H1 (cell line): ENCODE measurements at regions of chr22 and their contacts with region 1.

Region 1: DNA sequence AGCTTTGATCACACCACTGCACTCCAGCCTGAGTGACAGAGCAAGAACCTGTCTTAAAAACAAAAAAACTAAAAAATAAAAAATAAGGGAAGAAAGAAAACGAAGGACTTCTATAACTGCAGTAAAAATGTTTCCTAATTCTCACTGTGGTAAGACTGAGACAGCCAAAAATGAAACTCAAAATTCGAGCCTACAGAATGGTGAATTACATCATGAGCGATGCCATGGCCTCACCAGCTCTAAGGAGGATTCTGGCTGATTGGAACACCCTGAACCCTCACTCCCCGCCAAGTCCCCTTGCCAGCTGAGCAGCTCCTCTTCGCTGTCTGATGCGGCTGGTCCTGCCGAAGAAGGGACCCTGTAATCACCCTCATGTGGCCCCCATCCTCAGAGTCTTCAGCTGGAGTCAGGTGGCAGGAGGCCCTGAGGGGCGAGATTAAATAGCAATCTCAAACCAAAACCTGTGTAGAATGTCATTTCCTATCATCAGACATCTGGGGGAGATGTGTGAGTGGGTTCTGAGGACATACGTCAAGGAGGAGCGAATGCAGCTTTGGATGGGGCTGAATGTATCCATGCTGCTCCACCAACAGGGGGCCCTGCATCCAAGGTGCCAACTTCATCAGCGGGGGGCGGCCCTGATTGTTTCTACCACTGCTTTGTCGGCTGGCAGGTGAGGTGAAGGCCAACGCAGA is 29.2 kb downstream of the PDGFB start:
- DNase-seq: peak in 1 of 2 experiments; percentile 67
- H3K4me3 ChIP-seq: no peak overlapping the region
- H3K27ac ChIP-seq: no peak overlapping the region; the same call in 1 of the 2 replicates
- H3K4me1 ChIP-seq: peaks cover 15 to 30% (median 20%) of the 10 kb centered on the region in 4 experiments
- H3K27me3 ChIP-seq: no peaks in the 10 kb centered on the region
- CTCF ChIP-seq: peak; percentile 48 to 79 (median 76); a peak in 3 of 4 replicates
- EP300 ChIP-seq: no peak
- POLR2A ChIP-seq: no peak
- RAD21 ChIP-seq: peak; percentile 42 to 59

Region 2: DNA sequence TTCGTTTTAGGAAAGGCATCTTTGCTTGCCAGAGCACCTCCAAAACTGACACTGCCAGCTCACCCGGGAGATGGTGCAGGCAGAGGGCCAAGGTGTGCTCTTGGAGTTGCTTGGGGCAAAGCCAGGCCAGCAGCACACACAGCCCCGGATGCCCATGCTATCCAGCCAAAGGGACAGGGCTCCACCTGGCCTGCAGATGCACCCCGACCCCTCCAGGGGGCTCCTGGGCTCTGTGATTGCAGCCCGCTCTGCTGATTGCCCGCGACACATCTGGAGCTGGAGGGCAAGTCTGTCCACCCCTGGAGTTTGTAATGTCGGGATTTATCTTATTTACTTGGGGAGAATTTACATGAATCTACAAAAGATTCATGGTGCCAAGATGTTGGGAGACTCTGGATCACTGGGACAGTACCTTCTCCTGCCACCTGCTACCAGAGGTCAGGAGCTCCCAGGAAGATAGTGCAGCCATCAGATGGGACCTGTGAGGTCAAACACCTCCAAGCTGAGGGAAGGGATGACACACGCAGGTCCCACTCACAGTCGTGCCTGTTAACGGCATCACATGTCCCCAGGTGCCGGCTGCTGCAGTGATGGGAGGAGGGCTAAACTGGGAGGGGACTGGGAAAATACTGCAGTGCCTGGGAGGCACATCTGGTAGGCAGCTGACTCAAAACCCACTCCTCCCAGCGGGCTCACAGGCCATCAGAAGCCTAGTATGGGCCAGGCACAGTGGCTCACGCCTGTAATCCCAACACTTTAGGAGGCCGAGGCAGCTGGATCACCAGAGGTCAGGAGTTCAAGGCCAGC is 80.3 kb before region 1 on chr22:
- CTCF ChIA-PET with region 1: no interaction called
- POLR2A ChIA-PET with region 1: no interaction called
- DNase-seq: peak; percentile 50 to 90
- H3K4me3 ChIP-seq: no peak overlapping the region
- H3K27ac ChIP-seq: no peak overlapping the region
- H3K4me1 ChIP-seq: peaks cover 4 to 17% (median 11%) of the 10 kb centered on the region in 4 experiments; a peak in 4 of 7 replicates
- H3K27me3 ChIP-seq: no peaks in the 10 kb centered on the region
- CTCF ChIP-seq: peak; percentile 85 to 92 (median 92)
- EP300 ChIP-seq: no peak
- POLR2A ChIP-seq: no peak
- RAD21 ChIP-seq: peak; percentile 88 to 94

Region 3: DNA sequence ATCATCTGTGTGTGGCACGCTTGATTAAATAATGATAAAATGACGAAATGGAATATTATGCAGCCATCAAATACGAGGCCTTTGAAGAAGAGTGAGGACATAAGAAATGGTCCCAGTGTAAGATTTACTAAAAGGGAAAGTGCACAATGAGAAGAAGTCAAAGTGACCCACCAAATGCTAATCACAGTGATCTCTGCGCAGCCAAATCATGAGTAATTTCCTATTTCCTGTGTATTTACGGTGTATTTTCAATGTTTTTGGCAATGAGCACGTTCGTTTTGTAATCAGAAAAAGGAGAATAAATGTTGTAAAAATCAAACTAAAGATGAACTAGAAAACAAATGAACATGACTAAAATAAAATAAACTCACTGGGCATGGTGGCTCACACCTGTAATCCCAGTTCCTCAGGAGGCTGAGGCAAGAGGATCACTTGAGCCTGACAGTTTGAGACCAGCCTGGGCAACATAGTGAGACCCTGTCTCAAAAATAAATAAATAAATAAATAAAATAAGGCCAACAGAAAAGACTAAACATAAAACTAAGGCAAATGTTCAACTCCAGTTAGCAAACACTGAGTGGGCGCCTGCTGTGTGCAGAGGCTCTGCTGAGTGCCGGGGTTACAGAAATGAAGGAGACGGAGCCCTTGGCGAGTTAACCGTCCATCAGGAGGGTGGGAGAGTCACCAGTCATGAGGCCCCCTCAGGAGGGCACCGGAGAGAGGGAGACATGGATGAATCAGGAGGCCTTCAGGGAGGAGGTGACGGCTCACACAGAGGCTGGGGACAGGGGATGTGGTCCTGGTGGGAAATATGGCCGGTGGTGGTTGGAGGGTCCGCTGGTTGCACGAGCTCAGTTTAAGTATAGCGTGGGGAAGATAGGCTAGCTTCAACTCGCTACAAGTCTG is 37.1 kb before region 1 on chr22:
- CTCF ChIA-PET with region 1: interaction called, 35 read pairs
- POLR2A ChIA-PET with region 1: interaction called, 79 read pairs
- DNase-seq: no peak
- H3K4me3 ChIP-seq: no peak overlapping the region
- H3K27ac ChIP-seq: no peak overlapping the region
- H3K4me1 ChIP-seq: peaks cover 19 to 49% (median 44%) of the 10 kb centered on the region in 4 experiments
- H3K27me3 ChIP-seq: no peaks in the 10 kb centered on the region
- CTCF ChIP-seq: no peak
- EP300 ChIP-seq: no peak
- POLR2A ChIP-seq: no peak
- RAD21 ChIP-seq: no peak

Region 4: DNA sequence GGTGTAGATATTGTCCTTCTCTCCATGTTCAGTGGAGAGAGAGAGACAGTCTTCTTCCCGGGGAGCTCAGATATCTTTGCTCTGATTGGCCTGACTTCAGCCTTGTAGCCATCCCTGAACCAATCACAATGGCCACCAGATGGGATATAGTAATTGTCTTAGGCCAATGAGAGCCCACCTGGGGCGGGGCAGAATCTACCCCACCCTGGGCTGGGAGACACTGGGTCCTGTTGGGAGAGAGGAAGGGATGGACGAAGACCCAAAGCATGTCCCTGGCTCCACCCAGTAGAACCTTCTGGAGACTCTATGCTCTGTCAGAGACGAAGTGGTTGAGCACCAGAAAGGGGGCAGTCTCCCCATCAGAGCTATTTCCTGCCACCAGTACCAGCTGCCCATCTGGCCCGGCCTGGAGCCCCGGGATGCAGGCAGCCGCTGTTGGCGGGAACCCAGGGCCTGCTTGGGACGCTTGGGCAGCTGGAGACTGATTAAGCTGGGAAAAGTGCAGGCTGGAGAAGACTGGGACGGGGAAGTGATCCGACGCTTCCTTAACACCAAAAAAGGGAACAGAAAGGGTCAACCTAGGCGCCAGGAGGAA is 31.5 kb before region 1 on chr22:
- CTCF ChIA-PET with region 1: interaction called, 14 read pairs
- POLR2A ChIA-PET with region 1: interaction called, 8 read pairs
- DNase-seq: no peak
- H3K4me3 ChIP-seq: no peak overlapping the region
- H3K27ac ChIP-seq: no peak overlapping the region
- H3K4me1 ChIP-seq: peaks cover 0 to 18% (median 7%) of the 10 kb centered on the region in 4 experiments; a peak in 6 of 7 replicates
- H3K27me3 ChIP-seq: no peaks in the 10 kb centered on the region
- CTCF ChIP-seq: no peak
- EP300 ChIP-seq: no peak
- POLR2A ChIP-seq: no peak; a peak in 1 of 3 replicates
- RAD21 ChIP-seq: no peak

Region 5: GRCh38 chr22:39205338-39206021 is 10.1 kb before region 1 on chr22:
- CTCF ChIA-PET with region 1: interaction called, 6 read pairs
- POLR2A ChIA-PET with region 1: interaction called, 20 read pairs
- DNase-seq: no peak
- H3K4me3 ChIP-seq: no peak overlapping the region
- H3K27ac ChIP-seq: no peak overlapping the region
- H3K4me1 ChIP-seq: peaks cover 0 to 9% (median 4%) of the 10 kb centered on the region in 4 experiments; a peak in 5 of 7 replicates
- H3K27me3 ChIP-seq: no peaks in the 10 kb centered on the region
- CTCF ChIP-seq: no peak
- EP300 ChIP-seq: no peak
- POLR2A ChIP-seq: no peak
- RAD21 ChIP-seq: no peak

Region 6: DNA sequence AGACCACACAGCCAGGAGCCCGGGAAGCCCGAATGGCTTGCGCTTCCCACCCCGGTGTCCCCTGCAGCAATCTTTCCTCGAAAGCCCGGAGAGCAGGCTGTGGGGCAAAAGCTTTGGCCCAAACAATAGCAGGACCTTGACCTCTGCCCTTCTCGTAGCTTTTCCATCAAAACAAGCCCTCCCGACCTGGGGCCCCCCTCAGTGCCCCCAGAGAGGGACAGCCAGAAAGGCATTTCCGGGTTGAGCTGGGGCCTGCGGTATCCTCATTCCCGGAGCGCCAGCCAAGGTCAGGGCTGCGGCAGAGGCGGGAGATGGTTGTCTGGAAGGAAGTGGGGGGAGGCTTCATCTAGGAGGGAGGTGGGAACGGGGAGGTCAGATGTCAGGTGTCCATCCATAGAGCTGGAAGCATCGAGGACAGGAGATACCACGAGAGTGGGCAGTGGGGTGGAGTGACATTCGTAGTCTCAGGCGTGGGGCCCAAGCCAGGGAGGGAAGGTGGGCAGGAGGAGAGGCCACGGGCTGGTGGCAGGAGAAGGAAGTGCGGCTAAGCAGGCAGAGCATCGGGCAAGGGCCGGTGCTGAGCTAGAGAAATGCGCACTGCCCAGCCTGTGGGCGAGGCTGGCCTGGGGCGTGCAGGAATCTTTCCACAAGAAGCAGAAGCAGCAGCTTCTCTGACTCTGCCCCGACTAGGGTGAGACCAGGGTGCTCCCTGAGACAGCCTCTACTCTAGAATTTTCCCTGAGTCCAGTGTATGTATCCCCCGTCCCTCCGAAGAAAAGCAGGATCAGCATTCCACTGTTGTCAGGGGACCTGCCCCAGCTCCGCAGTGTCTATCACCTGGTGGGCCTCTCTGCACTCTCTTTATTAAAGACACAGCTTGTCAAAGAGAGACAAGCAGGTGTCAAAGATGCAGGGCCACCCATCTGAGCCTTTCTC is 15.0 kb after region 1 on chr22:
- CTCF ChIA-PET with region 1: interaction called, 22 read pairs
- POLR2A ChIA-PET with region 1: interaction called, 66 read pairs
- DNase-seq: peak in 1 of 2 experiments; percentile 81
- H3K4me3 ChIP-seq: peak overlapping the region in 1 of 4 experiments; percentile 27; a peak in 3 of 8 replicates
- H3K27ac ChIP-seq: no peak overlapping the region
- H3K4me1 ChIP-seq: peaks cover 4 to 42% (median 31%) of the 10 kb centered on the region in 4 experiments
- H3K27me3 ChIP-seq: peaks cover 0 to 19% (median 6%) of the 10 kb centered on the region in 4 experiments; a peak in 5 of 7 replicates
- CTCF ChIP-seq: peak; percentile 0 to 40 (median 20); a peak in 2 of 4 replicates
- EP300 ChIP-seq: no peak
- POLR2A ChIP-seq: no peak
- RAD21 ChIP-seq: no peak; a peak in 1 of 4 replicates

Region 7: DNA sequence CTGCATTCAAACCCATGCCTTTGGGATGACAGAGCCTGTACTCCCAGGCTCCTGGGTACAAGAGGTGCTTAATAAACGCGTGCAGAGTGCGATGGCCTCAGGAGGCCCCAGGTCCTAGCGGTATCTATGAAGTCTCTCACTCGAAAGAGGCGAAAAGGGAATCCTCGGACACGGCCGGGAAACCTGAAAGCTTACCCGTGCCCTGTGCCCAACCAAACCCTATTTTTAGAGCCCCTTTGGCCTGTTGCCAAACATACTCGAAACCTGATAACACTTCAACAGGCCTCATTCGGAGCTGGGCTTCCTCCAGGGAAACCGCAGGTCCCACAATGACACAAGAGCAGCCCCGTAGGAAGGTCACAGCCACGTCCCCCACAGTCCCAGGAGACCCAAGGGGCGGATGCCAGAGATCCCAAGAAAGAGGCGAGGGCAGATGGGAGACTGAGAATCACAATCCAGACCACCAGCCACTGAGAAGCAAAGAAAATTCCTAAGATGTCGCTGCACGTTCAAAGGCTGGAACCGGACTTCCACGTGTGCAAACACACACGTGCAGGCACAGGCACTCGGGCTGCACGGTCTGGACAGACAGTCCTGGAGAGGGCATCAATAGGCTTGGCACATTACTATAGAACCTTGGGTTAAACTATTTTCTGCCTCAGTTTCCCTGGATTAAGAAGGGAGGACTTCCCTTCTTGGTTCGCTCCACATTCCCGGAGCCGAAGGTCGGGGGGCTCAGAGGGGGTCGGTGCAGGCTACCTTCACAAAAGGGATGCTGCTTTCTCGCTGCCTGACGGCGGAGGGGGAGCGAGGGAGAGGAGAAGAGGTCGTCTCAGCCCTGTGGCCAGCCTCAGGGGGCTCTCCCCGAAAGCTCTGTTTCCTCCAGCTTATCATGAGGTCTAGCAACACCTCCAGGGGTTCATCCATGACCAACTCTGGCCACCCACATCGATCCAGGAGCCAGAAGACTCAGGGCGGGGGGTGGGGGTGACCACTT is 21.0 kb after region 1 on chr22:
- CTCF ChIA-PET with region 1: interaction called, 21 read pairs
- POLR2A ChIA-PET with region 1: interaction called, 66 read pairs
- DNase-seq: no peak
- H3K4me3 ChIP-seq: no peak overlapping the region
- H3K27ac ChIP-seq: no peak overlapping the region
- H3K4me1 ChIP-seq: peaks cover 4 to 33% (median 28%) of the 10 kb centered on the region in 4 experiments
- H3K27me3 ChIP-seq: peaks cover 0 to 28% (median 16%) of the 10 kb centered on the region in 4 experiments; a peak in 5 of 7 replicates
- CTCF ChIP-seq: no peak
- EP300 ChIP-seq: no peak
- POLR2A ChIP-seq: no peak
- RAD21 ChIP-seq: no peak